ENCODE measurements at regions of chr7 and their contacts with region 1.

Region 1: DNA sequence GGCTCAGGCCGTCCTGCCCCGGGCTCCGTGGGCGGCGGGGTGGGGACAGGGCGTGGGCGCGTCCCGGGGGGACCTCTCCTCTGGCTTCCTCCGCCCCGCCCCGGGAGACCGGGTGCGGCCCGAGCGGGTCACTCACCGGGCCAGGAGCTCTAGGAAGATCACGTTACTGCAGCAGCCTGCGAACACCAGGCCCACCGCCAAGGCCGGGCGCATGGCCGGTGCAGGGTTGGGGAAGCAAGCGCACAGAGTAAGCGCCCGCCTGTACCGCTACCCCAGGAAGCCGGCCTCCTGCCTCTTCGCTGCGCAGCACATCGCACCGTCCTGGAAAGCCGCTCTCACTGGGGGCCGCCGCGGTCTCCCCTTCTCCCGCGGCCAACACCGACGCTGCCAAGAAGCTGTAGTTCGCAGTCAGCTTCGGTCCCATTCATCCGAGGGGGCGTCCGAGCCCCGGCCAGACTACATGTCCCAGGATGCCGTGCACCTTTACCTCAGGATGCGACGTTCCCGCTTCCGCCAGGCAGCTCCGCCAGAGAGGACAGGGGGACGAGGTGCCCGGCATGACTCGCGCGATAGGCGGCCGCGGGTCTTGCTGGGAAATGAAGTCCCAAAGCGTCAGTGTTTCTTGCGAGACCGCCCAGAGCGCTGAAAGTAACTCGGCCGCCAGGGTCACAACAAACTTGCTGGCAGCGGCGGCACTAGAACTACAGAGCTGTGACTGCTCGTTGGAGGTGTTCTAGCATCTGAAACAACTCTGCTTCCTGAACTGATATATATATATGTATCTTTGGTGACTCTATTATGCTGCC is at the start of gene SLC35B4:
- DNase-seq: peak; percentile 98
- H3K4me3 ChIP-seq: peak within 1 kb of the TSS; percentile 93 to 97 (median 95)
- H3K27ac ChIP-seq: peak within 1 kb of the TSS; percentile 84 to 90 (median 90)
- H3K4me1 ChIP-seq: peaks cover 0 to 13% (median 8%) of the 10 kb centered on the region in 4 donors
- H3K27me3 ChIP-seq: no peaks in the 10 kb centered on the region
- CTCF ChIP-seq: peak in 2 of 4 experiments; percentile 5 to 16
- EP300 ChIP-seq: no peak
- POLR2A ChIP-seq: peak in 1 of 2 donors; percentile 15
- total RNA-seq, gene SLC35B4: 6.1 to 9.4 (median 7.6) TPM

Region 2: GRCh38 chr7:133081599-133082389 is 1234.9 kb before region 1 on chr7 and contains the start of gene CHCHD3:
- intact Hi-C with region 1: loop called (anchors 5 kb)
- DNase-seq: peak; percentile 98
- H3K4me3 ChIP-seq: peak within 1 kb of the TSS; percentile 73 to 96 (median 88)
- H3K27ac ChIP-seq: peak within 1 kb of the TSS; percentile 77 to 89 (median 88)
- H3K4me1 ChIP-seq: peaks cover 0 to 38% (median 20%) of the 10 kb centered on the region in 4 donors
- H3K27me3 ChIP-seq: no peaks in the 10 kb centered on the region
- CTCF ChIP-seq: no peak
- EP300 ChIP-seq: no peak
- POLR2A ChIP-seq: peak; percentile 42 to 56
- total RNA-seq, gene CHCHD3: 61.7 to 71.7 (median 63.0) TPM

Region 3: DNA sequence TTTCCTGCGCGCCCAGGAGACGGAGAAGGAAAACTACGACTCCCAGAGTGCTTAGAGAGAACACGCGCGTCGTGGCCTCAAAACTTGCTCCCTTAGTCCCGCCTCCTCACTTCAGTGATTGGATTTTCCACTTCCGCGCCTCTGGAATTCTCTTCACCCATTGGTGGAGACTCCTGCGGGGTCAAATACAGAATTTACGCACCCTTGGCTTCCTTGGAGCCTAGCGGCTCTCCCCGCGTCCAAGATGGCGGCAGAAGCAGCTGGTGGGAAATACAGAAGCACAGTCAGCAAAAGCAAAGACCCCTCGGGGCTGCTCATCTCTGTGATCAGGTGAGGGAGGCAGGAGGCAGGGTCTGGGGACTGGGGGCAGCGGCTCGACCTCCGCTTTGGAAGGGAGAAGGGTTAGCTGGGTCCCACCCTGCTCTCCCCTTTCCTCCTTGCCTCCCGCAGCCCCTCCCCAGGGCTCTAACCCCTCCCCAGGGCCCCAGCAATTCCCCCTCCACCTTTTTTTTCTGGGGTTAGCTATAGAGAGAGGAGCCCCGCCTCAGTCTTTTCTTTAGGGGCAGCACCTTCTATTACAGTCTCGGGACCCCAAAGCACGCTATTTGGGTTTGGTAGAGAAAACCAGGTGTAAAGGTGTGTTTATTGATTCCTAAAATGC is 1063.8 kb before region 1 on chr7 and contains the start of gene EXOC4:
- intact Hi-C with region 1: loop called (anchors 10 kb)
- DNase-seq: peak; percentile 97
- H3K4me3 ChIP-seq: peak within 1 kb of the TSS; percentile 83 to 96 (median 90)
- H3K27ac ChIP-seq: peak within 1 kb of the TSS; percentile 81 to 92 (median 88)
- H3K4me1 ChIP-seq: peaks cover 0 to 26% (median 19%) of the 10 kb centered on the region in 4 donors
- H3K27me3 ChIP-seq: no peaks in the 10 kb centered on the region
- CTCF ChIP-seq: no peak
- EP300 ChIP-seq: no peak
- POLR2A ChIP-seq: no peak
- total RNA-seq, gene EXOC4: 50.7 to 76.7 (median 54.9) TPM

Region 4: GRCh38 chr7:134126966-134127848 is 189.5 kb before region 1 on chr7 and contains the start of gene LRGUK:
- intact Hi-C with region 1: loop called (anchors 5 kb)
- DNase-seq: peak; percentile 90
- H3K4me3 ChIP-seq: peak within 1 kb of the TSS; percentile 51 to 66 (median 60)
- H3K27ac ChIP-seq: no peak within 1 kb of the TSS
- H3K4me1 ChIP-seq: peaks cover 0 to 12% (median 5%) of the 10 kb centered on the region in 4 donors
- H3K27me3 ChIP-seq: no peaks in the 10 kb centered on the region
- CTCF ChIP-seq: no peak
- EP300 ChIP-seq: no peak
- POLR2A ChIP-seq: no peak
- total RNA-seq, gene LRGUK: 0.28 to 0.71 (median 0.37) TPM